HepG2 (cell line): ENCODE measurements at regions of chr2 and their contacts with region 1.

Region 1: DNA sequence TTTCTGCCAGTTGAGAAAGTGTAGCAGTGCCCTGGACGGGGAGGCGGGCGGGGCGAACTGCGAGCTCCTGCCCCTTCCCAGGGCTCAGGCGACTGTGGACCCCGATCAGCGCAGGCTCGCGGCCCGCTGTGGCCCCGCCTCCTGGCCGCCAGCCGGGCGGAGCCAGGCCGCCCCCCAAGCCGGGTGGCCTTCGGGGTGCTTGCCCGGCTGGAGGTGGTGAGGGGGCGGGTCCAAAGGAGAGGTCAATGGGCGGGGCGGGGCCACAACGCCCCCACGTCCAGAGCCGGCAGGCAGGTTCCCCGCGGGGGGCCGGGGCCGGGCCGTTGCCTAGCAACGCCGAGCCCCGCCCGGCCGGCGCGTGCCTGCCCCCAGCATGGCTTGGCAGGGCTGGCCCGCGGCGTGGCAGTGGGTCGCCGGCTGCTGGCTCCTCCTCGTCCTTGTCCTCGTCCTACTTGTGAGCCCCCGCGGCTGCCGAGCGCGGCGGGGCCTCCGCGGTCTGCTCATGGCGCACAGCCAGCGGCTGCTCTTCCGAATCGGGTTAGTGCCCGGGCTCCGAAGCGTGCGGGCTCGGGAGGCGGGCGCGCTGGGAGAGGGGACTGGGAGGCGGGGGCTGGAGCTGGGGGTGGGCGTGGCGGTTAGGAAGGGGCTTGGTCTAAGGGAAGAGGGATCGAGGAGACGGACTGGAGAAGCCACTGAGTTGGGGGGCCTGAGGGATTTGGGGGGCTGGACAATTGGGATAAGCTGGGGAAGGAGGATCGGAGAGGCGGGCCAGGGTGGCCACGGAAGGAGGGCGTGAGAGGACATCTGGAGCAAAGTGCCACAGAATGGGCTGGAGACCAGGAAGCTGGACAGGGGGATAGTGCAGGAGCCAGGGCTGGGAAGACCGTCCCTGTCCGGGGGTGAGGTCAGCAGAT is 30.8 kb upstream of the TMBIM1 start:
- DNase-seq: peak; percentile 79
- ATAC-seq: peak; percentile 83
- H3K4me3 ChIP-seq: peak overlapping the region; percentile 64 to 99 (median 78)
- H3K27ac ChIP-seq: peak overlapping the region; percentile 87
- H3K4me1 ChIP-seq: peaks cover 35% of the 10 kb centered on the region
- H3K27me3 ChIP-seq: no peaks in the 10 kb centered on the region; a peak in 1 of 5 replicates
- CTCF ChIP-seq: peak; percentile 32
- EP300 ChIP-seq: peak in 1 of 2 experiments; percentile 17; a peak in 1 of 4 replicates
- POLR2A ChIP-seq: peak; percentile 78 to 93
- RAD21 ChIP-seq: no peak

Region 2: GRCh38 chr2:218292048-218293014 is 30.8 kb before region 1 on chr2 and contains the start of gene TMBIM1:
- CTCF ChIA-PET with region 1: no interaction called
- POLR2A ChIA-PET with region 1: interaction called, 64 read pairs
- in situ Hi-C with region 1: no loop called
- intact Hi-C with region 1: loop called (anchors 2 kb)
- DNase-seq: peak; percentile 72
- ATAC-seq: peak; percentile 84
- H3K4me3 ChIP-seq: peak within 1 kb of the TSS; percentile 83 to 99 (median 95)
- H3K27ac ChIP-seq: peak within 1 kb of the TSS; percentile 88
- H3K4me1 ChIP-seq: peaks cover 88% of the 10 kb centered on the region
- H3K27me3 ChIP-seq: no peaks in the 10 kb centered on the region; a peak in 1 of 5 replicates
- CTCF ChIP-seq: peak; percentile 72
- EP300 ChIP-seq: peak; percentile 38 to 73; a peak in 3 of 4 replicates
- POLR2A ChIP-seq: peak; percentile 77 to 88
- RAD21 ChIP-seq: peak; percentile 96
- total RNA-seq, gene TMBIM1: 69.7 and 139 TPM in 2 replicates

Region 3: GRCh38 chr2:218334531-218334930 is 11.4 kb after region 1 on chr2:
- CTCF ChIA-PET with region 1: no interaction called
- POLR2A ChIA-PET with region 1: interaction called, 15 read pairs
- in situ Hi-C with region 1: no loop called
- intact Hi-C with region 1: no loop called
- DNase-seq: no peak
- ATAC-seq: no peak
- H3K4me3 ChIP-seq: no peak overlapping the region
- H3K27ac ChIP-seq: no peak overlapping the region
- H3K4me1 ChIP-seq: peaks cover 27% of the 10 kb centered on the region
- H3K27me3 ChIP-seq: no peaks in the 10 kb centered on the region
- CTCF ChIP-seq: no peak
- EP300 ChIP-seq: no peak
- POLR2A ChIP-seq: no peak
- RAD21 ChIP-seq: no peak

Region 4: DNA sequence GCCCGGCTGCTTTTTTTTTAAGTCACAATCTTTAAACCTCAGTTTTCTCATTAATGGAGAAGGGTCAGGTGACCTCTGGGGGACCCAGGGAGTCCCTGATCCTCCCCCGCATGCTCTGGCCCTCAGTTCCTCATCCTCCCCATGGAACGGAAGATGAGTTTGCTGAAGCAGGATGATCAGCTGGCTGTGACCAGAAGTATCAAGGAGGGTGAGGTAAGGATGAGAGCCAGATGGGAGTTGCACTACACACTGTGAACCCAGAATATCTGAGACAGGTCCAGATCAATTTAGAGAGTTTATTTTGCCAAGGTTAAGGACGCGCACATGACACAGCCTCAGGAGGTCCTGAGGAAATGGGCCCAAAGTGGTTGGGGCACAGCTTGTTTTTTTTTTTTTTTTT is 37.3 kb after region 1 on chr2:
- CTCF ChIA-PET with region 1: no interaction called
- POLR2A ChIA-PET with region 1: interaction called, 66 read pairs
- in situ Hi-C with region 1: no loop called
- intact Hi-C with region 1: no loop called
- DNase-seq: no peak
- ATAC-seq: no peak
- H3K4me3 ChIP-seq: no peak overlapping the region
- H3K27ac ChIP-seq: no peak overlapping the region
- H3K4me1 ChIP-seq: peaks cover 65% of the 10 kb centered on the region
- H3K27me3 ChIP-seq: no peaks in the 10 kb centered on the region; a peak in 3 of 5 replicates
- CTCF ChIP-seq: no peak
- EP300 ChIP-seq: no peak
- POLR2A ChIP-seq: no peak
- RAD21 ChIP-seq: no peak

Region 5: GRCh38 chr2:218395797-218396687 is 72.9 kb after region 1 on chr2:
- CTCF ChIA-PET with region 1: no interaction called
- POLR2A ChIA-PET with region 1: interaction called, 22 read pairs
- in situ Hi-C with region 1: no loop called
- intact Hi-C with region 1: loop called (anchors 2 kb)
- DNase-seq: peak; percentile 94
- ATAC-seq: peak; percentile 25
- H3K4me3 ChIP-seq: peak overlapping the region; percentile 71 to 97 (median 85)
- H3K27ac ChIP-seq: peak overlapping the region; percentile 99
- H3K4me1 ChIP-seq: peaks cover 41% of the 10 kb centered on the region
- H3K27me3 ChIP-seq: no peaks in the 10 kb centered on the region; a peak in 1 of 5 replicates
- CTCF ChIP-seq: peak; percentile 94
- EP300 ChIP-seq: peak; percentile 19 to 78; a peak in 3 of 4 replicates
- POLR2A ChIP-seq: peak in 1 of 2 experiments; percentile 23; a peak in 1 of 4 replicates
- RAD21 ChIP-seq: peak; percentile 94

Region 6: DNA sequence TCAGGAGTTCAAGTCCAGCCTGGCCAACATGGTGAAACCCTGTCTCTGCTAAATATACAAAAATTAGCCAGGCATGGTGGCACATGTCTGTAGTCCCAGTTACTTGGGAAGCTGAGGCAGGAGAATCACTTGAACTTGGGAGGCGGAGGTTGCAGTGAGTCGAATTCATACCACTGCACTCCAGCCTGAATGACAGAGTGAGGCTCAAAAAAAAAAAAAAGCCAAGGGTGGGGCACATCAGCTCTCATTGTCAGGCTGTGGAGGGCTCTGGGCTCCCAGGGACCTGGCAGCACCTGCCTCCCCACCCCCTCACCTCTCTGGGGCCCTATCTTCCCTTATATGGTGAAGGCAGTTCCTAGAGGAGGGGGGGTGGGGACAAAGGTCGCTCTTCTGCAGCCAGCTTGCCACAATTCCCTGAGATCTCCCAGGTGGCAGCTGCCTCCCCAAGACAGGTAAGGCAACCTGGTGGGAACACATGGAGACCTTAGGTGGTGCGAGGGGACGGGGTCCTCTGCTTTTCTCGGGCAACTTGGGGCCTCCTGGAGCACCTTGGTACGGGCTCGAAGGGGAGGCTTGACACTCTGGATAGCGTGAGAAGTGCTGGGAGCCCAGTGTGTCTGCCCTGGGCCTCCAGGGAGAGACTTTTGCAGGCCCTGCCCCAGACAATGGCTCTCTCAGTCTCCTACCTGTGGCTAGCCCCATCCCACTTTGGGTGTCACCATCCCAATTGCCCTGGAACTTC is 95.7 kb after region 1 on chr2 and contains the start of gene VIL1:
- CTCF ChIA-PET with region 1: no interaction called
- POLR2A ChIA-PET with region 1: interaction called, 13 read pairs
- in situ Hi-C with region 1: no loop called
- intact Hi-C with region 1: no loop called
- DNase-seq: peak; percentile 94
- ATAC-seq: peak; percentile 89
- H3K4me3 ChIP-seq: peak within 1 kb of the TSS; percentile 73 to 89 (median 78)
- H3K27ac ChIP-seq: peak within 1 kb of the TSS; percentile 76
- H3K4me1 ChIP-seq: peaks cover 57% of the 10 kb centered on the region
- H3K27me3 ChIP-seq: no peaks in the 10 kb centered on the region; a peak in 1 of 5 replicates
- CTCF ChIP-seq: peak; percentile 15; the same call in 1 of the 2 replicates
- EP300 ChIP-seq: peak in 1 of 2 experiments; percentile 75; a peak in 2 of 4 replicates
- POLR2A ChIP-seq: peak; percentile 92 to 99
- RAD21 ChIP-seq: peak; percentile 38; the same call in 1 of the 2 replicates
- total RNA-seq, gene VIL1: 301 and 337 TPM in 2 replicates